Stomach (tissue), 19 donors: ENCODE measurements at regions of chr20 and their contacts with region 1.

Region 1: DNA sequence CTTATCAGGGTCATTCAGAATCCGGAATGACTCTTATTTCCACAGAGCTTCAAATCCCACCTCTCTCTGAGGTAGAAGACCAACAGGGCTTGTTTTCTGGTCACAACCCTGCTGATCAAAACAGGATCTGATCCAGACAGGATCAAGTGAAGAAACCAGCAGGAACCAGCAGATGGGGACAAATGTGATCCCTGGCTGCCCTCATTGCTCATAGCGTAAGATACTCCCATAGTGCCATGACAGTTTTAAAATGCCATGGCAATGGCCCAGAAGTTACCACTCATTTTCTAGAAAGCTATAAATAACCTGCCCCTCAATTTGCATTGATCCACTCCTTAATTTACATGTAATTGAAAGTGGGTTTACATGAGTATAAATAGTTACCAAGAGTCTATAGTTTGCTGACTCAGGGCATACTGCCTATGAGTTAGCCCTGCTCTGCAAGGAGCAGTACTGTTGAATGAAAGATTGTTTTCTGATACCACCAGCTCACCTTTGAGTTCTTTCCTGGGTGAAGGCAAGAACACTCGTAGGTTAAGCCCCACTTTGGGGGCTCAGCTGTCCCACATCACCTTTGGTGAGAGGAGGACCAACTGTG is 6.2 kb upstream of the ZNF334 start:
- DNase-seq: no peak
- H3K4me3 ChIP-seq: no peak overlapping the region
- H3K27ac ChIP-seq: no peak overlapping the region
- H3K4me1 ChIP-seq: no peaks in the 10 kb centered on the region
- H3K27me3 ChIP-seq: peaks cover 0 to 53% (median 4%) of the 10 kb centered on the region in 3 donors
- CTCF ChIP-seq: no peak
- EP300 ChIP-seq: no peak
- POLR2A ChIP-seq: no peak

Region 2: DNA sequence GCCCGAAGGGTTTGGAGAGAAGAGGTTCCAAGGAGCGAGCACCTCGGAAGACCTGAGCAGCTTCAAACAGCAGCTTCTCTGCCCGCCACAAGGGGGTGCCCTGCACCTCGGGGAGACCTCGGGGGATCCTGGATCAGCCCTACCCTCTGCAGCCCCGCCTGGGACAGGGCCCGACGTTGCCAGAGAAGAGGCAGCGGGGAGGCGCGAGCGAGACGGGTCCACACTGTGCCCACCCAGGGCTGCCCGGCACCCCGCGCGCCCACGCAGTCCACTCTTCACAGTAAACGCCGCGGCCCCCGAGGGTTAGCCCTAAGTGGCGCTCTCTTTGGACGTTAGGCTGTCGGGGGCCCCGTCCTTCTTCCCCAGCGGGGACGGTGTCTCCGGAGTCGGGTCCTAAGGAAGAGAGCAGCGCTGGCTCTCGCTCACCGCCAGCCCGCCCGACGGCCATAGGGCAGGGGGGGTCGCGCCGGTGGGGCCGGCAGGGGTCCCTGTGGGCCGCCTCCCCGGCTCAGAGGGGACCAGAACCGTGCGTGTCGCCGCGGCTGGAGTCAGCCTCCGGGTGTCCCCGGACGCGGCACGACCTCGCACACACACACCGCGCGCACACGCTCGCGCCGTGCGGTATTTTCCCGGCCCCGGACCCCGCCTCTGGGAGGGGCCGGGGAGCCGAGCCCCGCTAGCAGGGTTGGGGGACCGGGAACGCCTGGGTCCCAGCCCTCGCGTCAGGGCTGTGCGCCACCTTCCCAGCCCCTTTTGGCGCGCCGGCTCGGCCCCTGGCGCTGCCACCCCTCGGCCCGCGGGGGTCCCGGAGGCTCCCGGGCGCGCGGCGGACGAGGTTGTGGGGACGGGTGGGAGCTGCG is 212.2 kb before region 1 on chr20:
- intact Hi-C with region 1: no loop called
- DNase-seq: peak; percentile 52 to 85
- H3K4me3 ChIP-seq: peak overlapping the region; percentile 43 to 62 (median 54)
- H3K27ac ChIP-seq: no peak overlapping the region
- H3K4me1 ChIP-seq: peaks cover 24 to 50% (median 43%) of the 10 kb centered on the region in 4 donors
- H3K27me3 ChIP-seq: peaks cover 32 to 100% (median 65%) of the 10 kb centered on the region in 3 donors
- CTCF ChIP-seq: peak in 5 of 7 experiments; percentile 61 to 77 (median 68)
- EP300 ChIP-seq: no peak
- POLR2A ChIP-seq: no peak

Region 3: GRCh38 chr20:46681032-46681854 is 161.7 kb after region 1 on chr20:
- intact Hi-C with region 1: loop called (anchors 5 kb)
- DNase-seq: peak; percentile 80 to 87
- H3K4me3 ChIP-seq: no peak overlapping the region
- H3K27ac ChIP-seq: no peak overlapping the region
- H3K4me1 ChIP-seq: peaks cover 14 to 54% (median 38%) of the 10 kb centered on the region in 4 donors
- H3K27me3 ChIP-seq: no peaks in the 10 kb centered on the region
- CTCF ChIP-seq: peak in 5 of 7 experiments; percentile 69 to 87 (median 84)
- EP300 ChIP-seq: no peak
- POLR2A ChIP-seq: no peak